HEK293 (cell line): ENCODE measurements at regions of chr14 and their contacts with region 1.

Region 1: GRCh38 chr14:54175298-54175942 is 218.8 kb upstream of the BMP4 start:
- H3K4me3 ChIP-seq: no peak overlapping the region
- H3K27ac ChIP-seq: no peak overlapping the region
- H3K4me1 ChIP-seq: peaks cover 18% of the 10 kb centered on the region
- CTCF ChIP-seq: 0 out of 2 replicates have a peak, but pooled peaks have one; percentile 38

Region 2: GRCh38 chr14:53539489-53540126 is 635.8 kb before region 1 on chr14:
- CTCF ChIA-PET with region 1: interaction called, 24 read pairs
- POLR2A ChIA-PET with region 1: no interaction called
- H3K4me3 ChIP-seq: no peak overlapping the region
- H3K27ac ChIP-seq: no peak overlapping the region
- H3K4me1 ChIP-seq: no peaks in the 10 kb centered on the region; the same call in 1 of the 2 replicates
- CTCF ChIP-seq: peak; percentile 34; the same call in 1 of the 2 replicates

Region 3: DNA sequence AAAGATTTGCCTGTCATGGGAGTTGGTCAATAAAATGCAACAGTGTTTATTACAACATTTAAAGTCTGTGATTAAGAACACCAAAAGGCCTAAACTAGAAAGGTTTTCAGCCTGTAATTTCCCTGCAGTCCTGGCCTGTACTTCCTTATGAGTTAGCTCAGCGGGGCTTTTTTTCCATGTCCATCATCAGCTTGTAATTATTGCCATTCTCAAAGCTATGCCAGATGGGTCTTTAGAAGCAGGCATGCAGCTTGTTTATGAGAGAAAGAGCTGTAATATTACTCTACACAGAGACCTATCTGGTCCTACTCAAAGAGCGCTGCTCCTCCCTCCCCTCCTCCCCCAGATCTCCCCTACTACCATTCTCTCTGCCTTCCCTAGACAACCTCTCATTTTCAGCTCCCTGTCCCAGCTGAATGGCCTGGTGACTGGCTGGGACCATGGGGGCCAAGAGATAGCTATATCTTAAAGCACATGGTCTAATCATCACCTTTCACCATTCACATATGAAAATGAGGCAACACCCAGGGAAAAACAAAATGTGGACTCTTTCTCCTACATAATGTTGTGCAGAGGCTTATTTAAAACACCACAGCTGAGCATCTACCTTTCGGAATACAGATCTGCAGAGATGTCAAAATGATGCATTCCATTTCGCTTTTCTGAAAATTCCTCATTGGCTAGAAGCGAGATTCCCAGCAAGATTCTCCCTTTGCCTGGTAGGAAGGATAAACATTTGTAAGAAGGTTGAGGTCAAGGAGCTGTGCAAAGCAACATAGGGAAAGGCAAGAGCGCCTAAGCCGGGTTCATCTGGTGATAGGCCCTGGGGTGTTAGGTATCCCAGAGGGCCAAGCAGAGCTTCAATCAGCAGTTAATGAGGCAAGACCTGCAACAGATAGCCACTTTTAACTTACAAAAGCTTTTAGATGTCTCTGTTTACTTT is 11.7 kb after region 1 on chr14:
- CTCF ChIA-PET with region 1: interaction called, 10 read pairs
- POLR2A ChIA-PET with region 1: no interaction called
- H3K4me3 ChIP-seq: no peak overlapping the region
- H3K27ac ChIP-seq: no peak overlapping the region
- H3K4me1 ChIP-seq: peaks cover 2% of the 10 kb centered on the region
- CTCF ChIP-seq: no peak